Heart left ventricle (tissue), 16 donors: ENCODE measurements at regions of chr12 and their contacts with region 1.

Region 1: GRCh38 chr12:92784795-92785562 is 82.2 kb downstream of the PLEKHG7 start:
- DNase-seq: peak in 1 of 5 donors; percentile 14
- ATAC-seq: peak; percentile 83 to 95 (median 93)
- H3K4me3 ChIP-seq: no peak overlapping the region
- H3K27ac ChIP-seq: peak overlapping the region in 1 of 12 donors; percentile 4
- H3K4me1 ChIP-seq: peaks cover 0 to 25% (median 10%) of the 10 kb centered on the region in 12 donors
- H3K27me3 ChIP-seq: no peaks in the 10 kb centered on the region
- CTCF ChIP-seq: peak; percentile 38 to 70 (median 60)
- POLR2A ChIP-seq: no peak

Region 2: GRCh38 chr12:92928962-92929915 is 144.3 kb after region 1 on chr12 and contains the start of gene EEA1:
- intact Hi-C with region 1: loop called in 4 of 10 experiments (anchors 5 to 10 kb)
- DNase-seq: peak; percentile 98 to 99 (median 98)
- ATAC-seq: peak; percentile 94 to 96 (median 96)
- H3K4me3 ChIP-seq: peak within 1 kb of the TSS; percentile 62 to 94 (median 82)
- H3K27ac ChIP-seq: peak within 1 kb of the TSS; percentile 92 to 99 (median 98)
- H3K4me1 ChIP-seq: peaks cover 0 to 48% (median 25%) of the 10 kb centered on the region in 12 donors
- H3K27me3 ChIP-seq: no peaks in the 10 kb centered on the region
- CTCF ChIP-seq: peak in 8 of 12 donors; percentile 6 to 50 (median 30)
- POLR2A ChIP-seq: peak; percentile 72 to 95
- total RNA-seq, gene EEA1: 14.5 to 45.5 (median 29.9) TPM

Region 3: DNA sequence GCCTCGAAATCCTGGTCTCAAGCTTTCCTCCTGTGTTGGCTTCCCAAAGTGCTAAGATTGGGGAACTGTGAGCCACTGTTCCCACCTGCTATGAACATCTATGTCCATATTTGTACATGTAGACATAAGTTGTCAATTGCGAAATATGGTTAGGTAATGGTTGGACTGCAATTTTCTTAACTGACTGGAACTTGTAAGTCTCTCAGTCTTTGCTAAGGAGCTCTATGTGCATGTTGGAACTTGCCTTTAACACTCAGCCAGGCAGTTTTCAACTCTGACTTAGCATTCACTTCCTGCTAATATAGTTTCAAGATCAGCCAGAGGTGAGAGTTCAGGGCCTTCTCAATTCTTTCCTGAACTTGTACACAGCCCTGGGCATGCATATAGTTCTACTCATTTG is 188.6 kb after region 1 on chr12:
- intact Hi-C with region 1: loop called in 1 of 10 experiments (anchors 10 kb)
- DNase-seq: no peak
- ATAC-seq: peak in 3 of 4 donors; percentile 29 to 49 (median 35)
- H3K4me3 ChIP-seq: no peak overlapping the region
- H3K27ac ChIP-seq: peak overlapping the region in 1 of 12 donors; percentile 13
- H3K4me1 ChIP-seq: peaks cover 0 to 44% (median 2%) of the 10 kb centered on the region in 12 donors
- H3K27me3 ChIP-seq: no peaks in the 10 kb centered on the region
- CTCF ChIP-seq: no peak
- POLR2A ChIP-seq: no peak

Region 4: DNA sequence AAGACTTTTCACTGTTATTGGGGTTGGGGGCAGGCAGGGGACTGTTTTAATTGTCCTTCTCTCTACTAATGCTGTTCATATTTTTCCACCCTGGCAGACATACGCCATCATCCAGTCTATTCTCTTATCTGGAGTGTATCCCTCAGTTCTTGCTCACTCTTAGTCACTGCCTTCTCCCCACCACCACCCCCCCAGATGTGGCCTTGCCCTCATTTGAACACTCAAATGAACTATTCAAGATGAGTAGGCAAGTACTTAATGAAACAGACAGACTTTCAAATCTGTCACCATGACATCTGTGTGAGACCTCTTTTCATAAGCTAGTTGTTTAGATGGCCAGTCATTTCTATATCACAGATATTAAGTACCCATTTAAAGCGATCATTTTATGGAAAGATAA is 602.8 kb after region 1 on chr12:
- intact Hi-C with region 1: loop called in 1 of 10 experiments (anchors 10 kb)
- DNase-seq: no peak
- ATAC-seq: peak in 3 of 4 donors; percentile 15 to 59 (median 46)
- H3K4me3 ChIP-seq: no peak overlapping the region
- H3K27ac ChIP-seq: peak overlapping the region in 4 of 12 donors; percentile 3 to 45 (median 25)
- H3K4me1 ChIP-seq: peaks cover 0 to 80% (median 57%) of the 10 kb centered on the region in 12 donors
- H3K27me3 ChIP-seq: no peaks in the 10 kb centered on the region
- CTCF ChIP-seq: no peak
- POLR2A ChIP-seq: no peak

Region 5: DNA sequence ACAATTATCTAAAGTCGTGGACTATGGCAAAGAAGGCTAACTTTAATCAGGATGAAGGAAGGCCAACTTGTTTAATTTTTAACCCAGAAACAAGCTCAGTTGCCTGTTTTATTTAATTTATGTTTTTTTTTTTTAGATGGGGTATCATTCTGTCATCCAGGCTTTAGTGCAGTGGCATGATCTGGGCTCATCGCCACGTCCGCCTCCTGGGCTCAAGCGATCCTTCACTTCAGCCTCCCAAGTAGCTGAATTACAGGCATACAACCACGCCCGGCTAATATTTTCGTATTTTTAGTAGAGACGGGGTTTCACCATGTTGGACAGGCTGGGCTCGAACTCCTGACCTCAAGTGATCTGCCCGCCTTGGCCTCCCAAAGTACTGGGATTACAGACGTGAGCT is 612.4 kb after region 1 on chr12:
- intact Hi-C with region 1: loop called in 2 of 10 experiments (anchors 5 to 10 kb)
- DNase-seq: peak in 1 of 5 donors; percentile 25
- ATAC-seq: no peak
- H3K4me3 ChIP-seq: no peak overlapping the region
- H3K27ac ChIP-seq: peak overlapping the region in 4 of 12 donors; percentile 3 to 36 (median 30)
- H3K4me1 ChIP-seq: peaks cover 0 to 19% (median 6%) of the 10 kb centered on the region in 12 donors
- H3K27me3 ChIP-seq: no peaks in the 10 kb centered on the region
- CTCF ChIP-seq: no peak
- POLR2A ChIP-seq: no peak

Region 6: GRCh38 chr12:93419388-93420034 is 634.5 kb after region 1 on chr12:
- intact Hi-C with region 1: loop called in 4 of 10 experiments (anchors 5 to 10 kb)
- DNase-seq: no peak
- ATAC-seq: peak in 3 of 4 donors; percentile 43 to 54 (median 43)
- H3K4me3 ChIP-seq: peak overlapping the region in 1 of 12 donors; percentile 4
- H3K27ac ChIP-seq: peak overlapping the region in 2 of 12 donors; percentile 25 to 41
- H3K4me1 ChIP-seq: peaks cover 0 to 80% (median 47%) of the 10 kb centered on the region in 12 donors
- H3K27me3 ChIP-seq: no peaks in the 10 kb centered on the region
- CTCF ChIP-seq: peak; percentile 57 to 78 (median 70)
- POLR2A ChIP-seq: no peak